ENCODE measurements at regions of chr17 and their contacts with region 1.

Region 1: DNA sequence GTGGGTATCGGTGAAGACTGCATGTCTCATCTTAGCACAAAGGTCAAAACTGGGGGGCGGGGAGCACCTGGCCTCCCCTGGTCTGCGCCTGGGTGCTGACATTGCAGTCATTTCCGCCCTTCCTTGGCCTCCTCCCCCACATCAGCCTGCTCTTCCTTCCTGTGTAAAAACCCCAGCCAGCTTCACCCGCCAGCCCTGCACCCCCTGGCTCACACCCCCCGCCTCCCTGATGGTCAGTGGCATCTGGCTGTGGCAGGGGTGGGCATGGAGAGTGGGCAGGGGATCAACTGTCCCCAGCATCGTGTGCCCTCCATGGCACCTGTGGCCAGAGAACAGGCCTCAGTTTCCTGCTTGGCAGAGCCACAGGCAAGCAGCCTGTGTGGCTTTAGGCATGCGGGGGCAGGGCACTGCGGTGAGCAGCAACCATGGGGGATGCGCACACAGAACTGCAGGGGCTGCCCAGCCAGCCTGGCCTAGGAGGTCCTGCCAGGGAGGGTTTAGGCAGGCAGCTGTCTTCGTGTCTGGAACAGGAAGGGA is 26.5 kb upstream of the LASP1NB start:
- DNase-seq: no peak
- ATAC-seq: no peak
- H3K4me3 ChIP-seq: no peak overlapping the region
- H3K27ac ChIP-seq: peak overlapping the region in 1 of 2 experiments; percentile 85; a peak in 3 of 6 replicates
- H3K4me1 ChIP-seq: peaks cover 66% of the 10 kb centered on the region
- CTCF ChIP-seq: no peak
- EP300 ChIP-seq: no peak
- POLR2A ChIP-seq: no peak
- RAD21 ChIP-seq: no peak

Region 2: GRCh38 chr17:38667099-38667786 is 231.6 kb before region 1 on chr17:
- CTCF ChIA-PET with region 1: no interaction called
- POLR2A ChIA-PET with region 1: no interaction called
- DNase-seq: peak; percentile 82 to 89
- ATAC-seq: peak; percentile 55 to 68; a peak in 5 of 6 replicates
- H3K4me3 ChIP-seq: no peak overlapping the region
- H3K27ac ChIP-seq: no peak overlapping the region
- H3K4me1 ChIP-seq: peaks cover 14% of the 10 kb centered on the region; the same call in 2 of the 3 replicates
- CTCF ChIP-seq: peak; percentile 100
- EP300 ChIP-seq: no peak
- POLR2A ChIP-seq: no peak
- RAD21 ChIP-seq: peak; percentile 99 to 100

Region 3: DNA sequence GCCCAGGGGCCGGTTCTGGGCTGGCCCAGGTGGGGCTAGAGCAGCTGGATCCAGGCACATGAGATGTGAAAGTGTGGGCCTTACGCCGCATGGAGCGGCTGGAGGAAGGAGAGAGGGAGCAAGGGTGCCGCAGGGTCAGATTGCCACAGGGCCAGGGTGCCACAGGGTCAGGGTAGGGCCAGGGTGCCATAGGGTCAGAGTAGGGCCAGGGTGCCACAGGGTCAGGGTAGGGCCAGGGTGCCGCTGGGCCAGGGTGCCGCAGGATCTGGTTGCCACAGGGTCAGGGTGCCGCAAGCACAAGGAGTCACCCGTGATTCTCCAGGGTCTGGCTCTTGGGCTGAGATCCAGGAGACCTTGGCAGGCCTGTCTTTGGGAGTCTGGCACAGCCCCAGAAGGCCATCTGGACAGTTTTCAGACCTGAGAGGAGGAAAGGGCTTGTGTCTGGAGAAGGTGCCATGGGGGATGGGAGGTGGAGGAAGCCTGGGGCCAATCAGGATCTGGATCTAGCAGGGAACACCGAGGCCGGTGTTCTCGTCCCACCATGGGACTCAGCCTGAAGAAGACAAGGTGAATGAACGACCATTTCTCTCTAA is 13.4 kb after region 1 on chr17:
- CTCF ChIA-PET with region 1: interaction called, 11 read pairs
- POLR2A ChIA-PET with region 1: no interaction called
- DNase-seq: no peak
- ATAC-seq: no peak
- H3K4me3 ChIP-seq: no peak overlapping the region
- H3K27ac ChIP-seq: peak overlapping the region in 1 of 2 experiments; percentile 39; a peak in 1 of 6 replicates
- H3K4me1 ChIP-seq: peaks cover 34% of the 10 kb centered on the region
- CTCF ChIP-seq: no peak
- EP300 ChIP-seq: no peak
- POLR2A ChIP-seq: no peak
- RAD21 ChIP-seq: no peak

Region 4: GRCh38 chr17:38922538-38923297 is 23.8 kb after region 1 on chr17:
- CTCF ChIA-PET with region 1: interaction called, 13 read pairs
- POLR2A ChIA-PET with region 1: no interaction called
- DNase-seq: no peak
- ATAC-seq: peak; percentile 59 to 63
- H3K4me3 ChIP-seq: no peak overlapping the region
- H3K27ac ChIP-seq: peak overlapping the region in 1 of 2 experiments; percentile 45; a peak in 3 of 6 replicates
- H3K4me1 ChIP-seq: peaks cover 11% of the 10 kb centered on the region; the same call in 1 of the 3 replicates
- CTCF ChIP-seq: no peak
- EP300 ChIP-seq: no peak
- POLR2A ChIP-seq: no peak
- RAD21 ChIP-seq: no peak